ENCODE measurements at regions of chr9 and their contacts with region 1.

Region 1: DNA sequence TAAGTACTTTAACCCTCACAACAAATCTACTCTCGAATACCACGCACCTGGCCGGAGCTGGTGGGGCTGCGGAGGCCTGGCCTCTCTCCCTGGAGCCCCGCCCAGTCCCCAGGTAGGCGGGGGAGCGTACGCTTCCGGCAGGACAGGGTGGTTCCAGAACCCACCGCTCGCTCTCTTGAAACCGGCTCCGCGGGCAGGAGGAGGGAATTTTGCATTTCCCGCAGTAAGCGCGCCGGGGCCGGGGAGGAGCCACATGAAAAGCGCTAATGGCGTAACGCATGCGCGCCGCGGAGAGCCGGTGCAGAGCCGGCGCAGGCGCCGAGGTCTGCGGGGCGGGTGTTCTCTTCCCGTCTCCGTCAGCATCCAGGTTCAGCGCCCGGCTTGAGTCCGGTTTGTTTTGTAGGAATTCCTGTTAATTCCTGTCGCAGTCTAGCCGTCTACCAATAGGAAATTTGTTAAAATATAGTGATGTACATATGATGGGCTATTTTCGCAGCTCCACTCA is 20.8 kb downstream of the CAVIN4 start:
- DNase-seq: peak; percentile 63 to 76
- ATAC-seq: peak; percentile 69 to 90
- H3K4me3 ChIP-seq: peak overlapping the region; percentile 62
- H3K27ac ChIP-seq: peak overlapping the region; percentile 67 to 80
- H3K4me1 ChIP-seq: peaks cover 3% of the 10 kb centered on the region; the same call in 1 of the 3 replicates
- CTCF ChIP-seq: no peak
- EP300 ChIP-seq: no peak
- POLR2A ChIP-seq: peak; percentile 51
- RAD21 ChIP-seq: no peak

Region 2: GRCh38 chr9:99184475-99185347 is 1414.0 kb before region 1 on chr9:
- CTCF ChIA-PET with region 1: interaction called, 12 read pairs
- POLR2A ChIA-PET with region 1: no interaction called
- DNase-seq: peak; percentile 78 to 84
- ATAC-seq: peak; percentile 84 to 96
- H3K4me3 ChIP-seq: peak overlapping the region; percentile 34; the same call in 2 of the 3 replicates
- H3K27ac ChIP-seq: peak overlapping the region in 1 of 2 experiments; percentile 35; a peak in 1 of 6 replicates
- H3K4me1 ChIP-seq: no peaks in the 10 kb centered on the region
- CTCF ChIP-seq: peak; percentile 89
- EP300 ChIP-seq: no peak
- POLR2A ChIP-seq: no peak
- RAD21 ChIP-seq: peak; percentile 90 to 93

Region 3: DNA sequence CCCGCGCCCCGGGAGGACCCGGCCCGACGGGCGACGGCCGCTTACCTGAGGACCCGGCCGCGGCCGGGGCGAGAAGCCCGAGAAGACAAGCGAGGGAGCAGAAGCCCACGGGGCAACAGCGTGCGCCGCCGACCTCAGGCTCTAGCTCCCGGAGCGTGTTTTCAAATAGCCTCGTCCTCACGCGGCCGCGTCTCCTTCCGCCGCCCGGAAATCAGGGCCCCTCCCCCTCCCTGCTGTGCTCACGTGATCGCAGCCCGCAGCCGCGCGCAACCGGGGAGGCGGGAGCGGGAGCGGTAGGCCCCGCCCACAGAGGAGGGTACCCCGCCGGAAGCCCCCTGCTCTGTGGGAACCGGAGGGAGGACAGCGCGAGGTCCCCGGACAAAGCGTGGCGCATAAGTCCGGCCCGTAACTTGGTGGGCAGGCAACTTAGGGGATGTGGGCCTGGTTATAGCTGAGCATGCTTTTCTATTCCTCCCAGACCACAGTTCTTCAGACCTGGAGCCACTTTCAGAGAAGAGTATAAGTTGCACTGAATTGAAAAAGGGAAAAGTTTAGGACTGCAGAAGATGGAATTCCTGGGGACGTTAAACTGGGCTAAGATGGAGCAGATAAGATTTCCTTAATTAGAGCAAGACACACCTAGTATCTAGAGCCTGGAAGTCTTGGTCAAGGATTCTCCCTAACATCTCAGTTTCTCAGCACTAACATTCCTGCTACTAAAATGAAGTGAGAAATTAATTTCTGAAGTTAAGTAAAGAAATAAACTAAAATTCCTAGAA is 245.8 kb before region 1 on chr9 and contains the start of gene TEX10:
- CTCF ChIA-PET with region 1: interaction called, 5 read pairs
- POLR2A ChIA-PET with region 1: interaction called, 11 read pairs
- DNase-seq: peak; percentile 86 to 87
- ATAC-seq: peak; percentile 88 to 91
- H3K4me3 ChIP-seq: peak within 1 kb of the TSS; percentile 99
- H3K27ac ChIP-seq: peak within 1 kb of the TSS; percentile 98 to 99
- H3K4me1 ChIP-seq: peaks cover 26% of the 10 kb centered on the region; the same call in 2 of the 3 replicates
- CTCF ChIP-seq: no peak
- EP300 ChIP-seq: no peak
- POLR2A ChIP-seq: peak; percentile 86; the same call in 1 of the 2 replicates
- RAD21 ChIP-seq: 0 out of 5 replicates have a peak, but pooled peaks of 1 of the 2 experiments have one; percentile 14
- polyA plus RNA-seq, gene TEX10: 31.2 and 37.0 TPM in 2 replicates

Region 4: GRCh38 chr9:101235105-101235866 is 636.6 kb after region 1 on chr9:
- CTCF ChIA-PET with region 1: interaction called, 10 read pairs
- POLR2A ChIA-PET with region 1: interaction called, 3 read pairs
- DNase-seq: peak in 1 of 2 experiments; percentile 35
- ATAC-seq: peak; percentile 66 to 73
- H3K4me3 ChIP-seq: no peak overlapping the region
- H3K27ac ChIP-seq: no peak overlapping the region
- H3K4me1 ChIP-seq: no peaks in the 10 kb centered on the region
- CTCF ChIP-seq: peak; percentile 53
- EP300 ChIP-seq: no peak
- POLR2A ChIP-seq: no peak
- RAD21 ChIP-seq: peak; percentile 67 to 72

Region 5: DNA sequence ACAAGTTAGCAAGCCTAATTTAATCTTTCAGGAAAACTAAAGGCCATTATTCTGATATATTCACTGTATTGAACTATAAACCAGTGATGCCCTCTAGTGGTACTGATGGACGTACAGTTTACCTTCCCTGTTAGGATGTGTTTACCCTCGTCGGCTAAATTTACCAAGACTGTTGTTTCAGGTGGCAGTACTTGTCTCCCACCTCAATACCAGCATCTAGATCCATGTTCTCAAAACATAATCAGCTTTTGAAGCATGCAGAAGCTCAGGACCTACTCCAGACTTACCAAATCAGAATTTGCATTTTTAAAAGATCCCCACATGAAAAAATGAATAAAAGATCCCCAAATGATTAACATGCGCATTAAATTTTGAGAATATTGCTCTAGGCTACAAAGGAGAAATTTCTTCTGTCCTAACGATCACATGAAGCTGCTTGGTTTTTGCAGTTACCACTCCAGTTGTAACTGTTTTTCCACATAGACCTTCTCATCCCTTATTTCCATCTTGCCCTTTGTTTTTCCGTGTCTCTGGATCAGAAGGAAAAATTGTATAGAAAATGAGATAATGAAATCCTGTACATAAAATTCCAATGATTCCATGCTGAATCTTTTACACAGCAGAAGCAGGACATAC is 789.3 kb after region 1 on chr9:
- CTCF ChIA-PET with region 1: interaction called, 14 read pairs
- POLR2A ChIA-PET with region 1: no interaction called
- DNase-seq: peak in 1 of 2 experiments; percentile 82
- ATAC-seq: peak; percentile 98 to 99
- H3K4me3 ChIP-seq: no peak overlapping the region
- H3K27ac ChIP-seq: peak overlapping the region; percentile 68 to 82
- H3K4me1 ChIP-seq: peaks cover 44% of the 10 kb centered on the region
- CTCF ChIP-seq: peak; percentile 74
- EP300 ChIP-seq: no peak
- POLR2A ChIP-seq: no peak
- RAD21 ChIP-seq: peak; percentile 84

Measured in A549 (cell line).